ENCODE measurements at regions of chr6 and their contacts with region 1.

Region 1: DNA sequence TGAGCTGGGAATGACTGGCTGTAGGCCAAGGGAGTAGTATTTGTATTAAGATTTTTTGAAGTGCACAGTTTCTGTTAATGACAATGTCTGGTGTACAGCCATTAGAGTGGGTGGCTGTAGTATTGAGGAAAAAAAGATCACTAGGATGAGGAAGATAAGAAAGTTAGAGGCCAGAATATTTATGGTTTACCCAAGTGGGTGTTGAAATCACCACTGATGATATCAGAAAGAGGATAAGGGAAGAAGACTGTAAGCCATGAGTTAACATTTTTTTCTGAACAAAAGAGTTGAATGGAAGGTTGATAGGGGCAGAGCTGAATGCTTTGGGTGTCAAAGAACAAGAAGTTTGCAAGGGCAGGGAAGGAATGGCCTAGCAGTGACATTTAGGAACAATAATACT is 104.7 kb downstream of the PRDM13 start:
- DNase-seq: no peak

Region 2: DNA sequence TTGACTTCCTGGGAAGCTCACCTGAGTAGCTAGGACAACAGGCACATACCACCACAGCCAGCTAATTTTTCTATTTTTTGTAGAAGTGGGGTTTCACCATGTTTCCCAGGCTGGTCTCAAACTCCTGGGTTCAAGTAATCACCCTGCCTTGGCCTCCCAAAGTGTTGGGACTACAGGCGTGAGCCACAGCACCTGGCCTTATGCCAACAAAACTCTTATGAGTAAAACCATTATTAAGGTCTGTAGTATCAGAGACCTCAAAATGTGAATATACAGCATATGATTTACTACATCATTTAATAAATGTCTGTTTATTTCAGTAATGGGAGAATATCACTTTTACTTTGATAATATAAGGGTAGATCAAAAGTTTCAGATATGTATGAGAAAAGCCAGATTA is 174.8 kb before region 1 on chr6:
- intact Hi-C with region 1: no loop called
- DNase-seq: no peak

Region 3: GRCh38 chr6:99993533-99994251 is 282.4 kb after region 1 on chr6 and contains the start of gene MCHR2:
- intact Hi-C with region 1: loop called in 1 of 2 experiments (anchors 5 kb)
- DNase-seq: no peak
- total RNA-seq, gene MCHR2: not detected

Measured in posterior vena cava (tissue), 2 donors.